Common myeloid progenitor, CD34-positive (primary cell): ENCODE measurements at regions of chr4 and their contacts with region 1.

Region 1: GRCh38 chr4:48526406-48526805 is 36.4 kb downstream of the ZAR1 start:
- DNase-seq: peak in 1 of 3 donors; percentile 14
- H3K4me3 ChIP-seq: no peak overlapping the region
- H3K27ac ChIP-seq: no peak overlapping the region
- H3K4me1 ChIP-seq: no peaks in the 10 kb centered on the region
- H3K27me3 ChIP-seq: no peaks in the 10 kb centered on the region

Region 2: GRCh38 chr4:48483006-48483776 is 43.2 kb before region 1 on chr4 and contains the start of gene SLC10A4:
- CTCF ChIA-PET with region 1: no interaction called
- POLR2A ChIA-PET with region 1: no interaction called
- DNase-seq: peak; percentile 45 to 67 (median 50)
- H3K4me3 ChIP-seq: peak within 1 kb of the TSS in 6 of 7 experiments; percentile 26 to 61 (median 54)
- H3K27ac ChIP-seq: no peak within 1 kb of the TSS
- H3K4me1 ChIP-seq: peaks cover 0 to 22% (median 11%) of the 10 kb centered on the region in 4 experiments
- H3K27me3 ChIP-seq: peaks cover 25 to 77% (median 38%) of the 10 kb centered on the region in 5 experiments

Region 3: GRCh38 chr4:48538358-48538757 is 12.0 kb after region 1 on chr4:
- CTCF ChIA-PET with region 1: interaction called, 10 read pairs
- POLR2A ChIA-PET with region 1: no interaction called
- DNase-seq: no peak
- H3K4me3 ChIP-seq: no peak overlapping the region
- H3K27ac ChIP-seq: peak overlapping the region in 1 of 2 experiments; percentile 30
- H3K4me1 ChIP-seq: peaks cover 0 to 10% (median 4%) of the 10 kb centered on the region in 4 experiments
- H3K27me3 ChIP-seq: no peaks in the 10 kb centered on the region

Region 4: GRCh38 chr4:48578132-48578968 is 51.9 kb after region 1 on chr4:
- CTCF ChIA-PET with region 1: no interaction called
- POLR2A ChIA-PET with region 1: no interaction called
- DNase-seq: peak; percentile 69 to 82 (median 75)
- H3K4me3 ChIP-seq: no peak overlapping the region
- H3K27ac ChIP-seq: no peak overlapping the region
- H3K4me1 ChIP-seq: no peaks in the 10 kb centered on the region
- H3K27me3 ChIP-seq: no peaks in the 10 kb centered on the region

Region 5: DNA sequence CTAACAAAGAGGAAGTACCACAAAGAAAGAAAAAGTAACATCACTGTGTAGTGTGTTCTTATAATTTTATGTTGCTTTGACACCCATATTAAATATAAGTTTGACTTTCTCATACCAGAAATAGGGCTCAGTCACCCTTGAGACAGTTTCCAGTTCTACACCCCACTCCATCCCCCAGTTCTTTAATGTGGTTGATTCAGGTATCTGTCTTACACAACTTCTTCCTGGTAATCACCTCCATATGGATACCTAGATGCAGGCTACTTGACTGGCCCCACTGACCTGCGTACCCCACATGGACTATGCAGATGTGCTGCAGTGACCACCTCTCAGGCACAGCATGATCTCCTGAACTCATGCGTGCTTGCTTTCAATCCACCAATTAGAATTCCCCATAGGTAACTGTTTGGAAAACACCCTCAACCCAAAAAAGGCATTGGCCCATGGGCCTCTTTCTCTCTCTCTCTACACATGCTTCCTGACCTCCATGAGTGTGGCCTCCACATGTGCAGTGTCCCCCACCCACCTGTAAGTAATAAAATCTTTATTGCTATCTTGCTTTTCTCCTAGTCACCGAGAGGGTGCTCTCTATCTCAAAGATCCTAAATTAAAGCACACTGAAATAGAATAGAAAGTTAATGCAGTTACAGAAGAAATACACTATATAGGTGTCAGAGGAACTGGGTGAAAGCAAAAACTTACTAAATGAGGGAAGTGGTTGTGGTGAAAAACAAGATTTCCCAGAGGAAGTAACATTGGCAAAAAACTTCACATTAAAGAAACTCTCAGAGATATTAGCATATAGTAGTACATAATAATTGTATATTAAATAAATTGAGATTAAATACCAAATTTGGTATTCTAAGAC is 62.1 kb after region 1 on chr4:
- CTCF ChIA-PET with region 1: no interaction called
- POLR2A ChIA-PET with region 1: no interaction called
- DNase-seq: peak in 2 of 3 donors; percentile 4 to 13
- H3K4me3 ChIP-seq: no peak overlapping the region
- H3K27ac ChIP-seq: no peak overlapping the region
- H3K4me1 ChIP-seq: peaks cover 0 to 7% (median 3%) of the 10 kb centered on the region in 4 experiments
- H3K27me3 ChIP-seq: no peaks in the 10 kb centered on the region

Region 6: DNA sequence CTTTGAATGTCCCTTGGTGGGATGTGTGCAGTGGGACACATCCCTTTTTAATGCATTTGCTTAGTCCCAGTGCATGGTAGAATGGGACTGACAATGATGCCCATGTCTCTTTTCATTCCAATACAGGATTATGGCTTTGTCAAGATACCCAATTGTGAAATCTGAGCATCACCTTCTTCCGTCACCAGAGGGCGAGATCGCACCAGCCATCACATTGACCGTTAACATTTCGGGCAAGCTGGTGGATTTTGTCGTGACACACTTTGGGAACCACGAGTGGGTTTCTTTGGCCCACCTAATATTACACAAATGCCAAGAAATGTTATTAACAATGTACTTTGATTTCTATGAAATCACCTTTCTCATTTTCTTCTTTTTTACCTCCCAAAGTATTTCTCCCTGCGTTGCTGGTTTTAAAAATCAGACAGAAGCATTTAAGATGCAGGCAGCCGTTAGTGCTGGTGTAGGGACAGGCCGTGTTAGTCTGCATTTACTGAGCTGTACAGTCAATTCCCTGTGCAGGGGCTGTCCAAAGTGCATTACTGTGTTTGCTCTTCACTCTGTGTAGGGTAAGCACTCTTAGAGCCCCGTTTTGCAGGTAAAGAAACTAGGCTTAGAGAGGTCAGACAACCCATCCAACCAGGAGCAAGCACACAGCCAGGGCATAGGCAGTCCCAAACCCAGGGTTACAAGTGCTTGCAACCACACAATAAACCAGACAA is 506.2 kb after region 1 on chr4:
- CTCF ChIA-PET with region 1: no interaction called
- POLR2A ChIA-PET with region 1: no interaction called
- DNase-seq: peak in 1 of 3 donors; percentile 11
- H3K4me3 ChIP-seq: no peak overlapping the region
- H3K27ac ChIP-seq: no peak overlapping the region
- H3K4me1 ChIP-seq: no peaks in the 10 kb centered on the region
- H3K27me3 ChIP-seq: peaks cover 3 to 17% (median 5%) of the 10 kb centered on the region in 5 experiments